Head of caudate nucleus (tissue), 42 donors: ENCODE measurements at regions of chr10 and their contacts with region 1.

Region 1: GRCh38 chr10:22228943-22229801 is 11.4 kb upstream of the EBLN1 start:
- DNase-seq: peak; percentile 71 to 95 (median 88)

Region 2: GRCh38 chr10:22003079-22003913 is 225.9 kb before region 1 on chr10 and contains the start of gene DNAJC1:
- intact Hi-C with region 1: loop called (anchors 2 kb)
- DNase-seq: peak; percentile 97 to 99 (median 99)

Region 3: DNA sequence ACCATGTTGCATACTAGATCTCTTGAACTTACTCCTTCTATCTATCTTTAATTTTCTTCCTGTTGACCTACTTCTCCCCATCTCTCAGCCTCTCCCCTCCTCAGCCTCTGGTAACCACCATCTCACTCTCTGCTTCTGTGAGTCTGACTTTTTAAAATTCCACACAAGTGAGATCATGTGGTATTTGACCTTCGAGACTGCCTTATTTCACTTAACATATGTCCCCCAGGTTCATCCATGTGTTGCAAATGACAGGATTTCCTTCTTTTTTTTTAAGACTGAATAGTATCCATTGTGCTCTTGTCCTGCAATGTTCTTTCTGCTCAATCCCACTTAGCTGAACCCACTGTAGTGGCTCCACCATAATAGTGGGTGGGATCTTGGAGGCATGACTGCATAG is 174.2 kb before region 1 on chr10:
- intact Hi-C with region 1: no loop called
- DNase-seq: no peak

Region 4: DNA sequence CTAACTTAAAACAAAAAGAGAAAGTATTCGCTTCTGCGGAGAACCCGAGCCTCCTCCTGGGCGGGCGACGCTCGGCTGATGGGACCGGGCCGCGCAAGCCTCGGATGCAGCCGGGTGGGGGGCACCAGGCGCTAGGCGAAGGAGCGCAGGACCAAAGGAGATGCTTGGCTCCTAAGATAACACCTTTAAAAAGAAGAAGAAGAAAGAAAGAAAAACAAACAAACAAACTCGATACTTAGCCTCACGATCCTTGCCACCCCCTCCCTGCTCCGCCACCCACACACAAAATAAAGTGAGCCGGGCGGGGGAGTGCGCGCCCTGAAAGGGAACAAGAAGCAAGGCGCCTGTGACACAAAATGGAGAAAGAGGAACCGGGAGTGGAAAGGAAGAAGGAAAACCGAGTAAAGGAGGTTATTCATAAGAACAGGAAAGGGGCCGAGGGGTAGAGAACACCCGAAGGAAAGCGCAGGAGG is 22.6 kb after region 1 on chr10:
- intact Hi-C with region 1: loop called (anchors 2 kb)
- DNase-seq: peak; percentile 55 to 91 (median 79)

Region 5: GRCh38 chr10:22316285-22317120 is 87.3 kb after region 1 on chr10 and contains the start of gene COMMD3:
- intact Hi-C with region 1: loop called (anchors 1 kb)
- DNase-seq: peak; percentile 77 to 95 (median 90)

Region 6: GRCh38 chr10:22356333-22356873 is 127.2 kb after region 1 on chr10:
- intact Hi-C with region 1: no loop called
- DNase-seq: no peak